ENCODE measurements at regions of chr11 and their contacts with region 1.

Region 1: GRCh38 chr11:38089726-38090125 is 1491.7 kb upstream of the RAG2 start:
- DNase-seq: no peak
- ATAC-seq: no peak
- H3K4me3 ChIP-seq: no peak overlapping the region
- H3K4me3 Mint-ChIP-seq: no peak overlapping the region
- H3K27ac ChIP-seq: no peak overlapping the region
- H3K27ac Mint-ChIP-seq: no peak overlapping the region
- H3K4me1 ChIP-seq: no peaks in the 10 kb centered on the region
- H3K4me1 Mint-ChIP-seq: no peaks in the 10 kb centered on the region
- H3K27me3 ChIP-seq: no peaks in the 10 kb centered on the region
- H3K27me3 Mint-ChIP-seq: no peaks in the 10 kb centered on the region
- CTCF ChIP-seq: no peak

Region 2: DNA sequence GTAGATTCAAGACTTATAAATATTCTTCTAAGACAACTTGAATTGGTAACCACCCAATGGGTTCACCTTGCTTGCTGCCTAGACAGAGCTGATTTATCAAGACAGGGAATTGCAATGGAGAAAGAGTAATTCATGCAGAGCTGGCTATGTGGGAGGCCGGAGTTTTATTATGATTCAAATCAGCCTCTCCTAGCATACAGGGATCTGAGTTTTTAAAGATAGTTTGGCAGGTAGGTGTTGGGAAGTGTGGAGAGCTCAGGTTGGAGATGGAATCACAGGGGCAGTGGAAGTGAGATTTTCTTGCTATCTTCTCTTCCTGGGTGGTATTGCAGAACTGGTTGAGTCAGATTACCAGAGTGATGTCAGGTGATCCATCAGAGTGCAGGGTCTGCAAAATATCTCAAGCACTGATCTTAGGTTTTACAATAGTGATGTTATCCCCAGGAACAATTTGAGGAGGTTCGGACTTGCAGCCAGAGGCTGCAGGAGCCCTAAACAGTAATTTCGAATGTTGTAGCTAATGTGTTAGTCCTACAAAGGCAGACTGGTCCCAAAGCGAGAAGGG is 43.1 kb before region 1 on chr11:
- CTCF ChIA-PET with region 1: no interaction called
- POLR2A ChIA-PET with region 1: no interaction called
- intact Hi-C with region 1: no loop called
- DNase-seq: no peak
- ATAC-seq: no peak
- H3K4me3 ChIP-seq: no peak overlapping the region
- H3K4me3 Mint-ChIP-seq: no peak overlapping the region
- H3K27ac ChIP-seq: no peak overlapping the region
- H3K27ac Mint-ChIP-seq: no peak overlapping the region
- H3K4me1 ChIP-seq: no peaks in the 10 kb centered on the region
- H3K4me1 Mint-ChIP-seq: no peaks in the 10 kb centered on the region
- H3K27me3 ChIP-seq: no peaks in the 10 kb centered on the region
- H3K27me3 Mint-ChIP-seq: no peaks in the 10 kb centered on the region
- CTCF ChIP-seq: no peak

Region 3: DNA sequence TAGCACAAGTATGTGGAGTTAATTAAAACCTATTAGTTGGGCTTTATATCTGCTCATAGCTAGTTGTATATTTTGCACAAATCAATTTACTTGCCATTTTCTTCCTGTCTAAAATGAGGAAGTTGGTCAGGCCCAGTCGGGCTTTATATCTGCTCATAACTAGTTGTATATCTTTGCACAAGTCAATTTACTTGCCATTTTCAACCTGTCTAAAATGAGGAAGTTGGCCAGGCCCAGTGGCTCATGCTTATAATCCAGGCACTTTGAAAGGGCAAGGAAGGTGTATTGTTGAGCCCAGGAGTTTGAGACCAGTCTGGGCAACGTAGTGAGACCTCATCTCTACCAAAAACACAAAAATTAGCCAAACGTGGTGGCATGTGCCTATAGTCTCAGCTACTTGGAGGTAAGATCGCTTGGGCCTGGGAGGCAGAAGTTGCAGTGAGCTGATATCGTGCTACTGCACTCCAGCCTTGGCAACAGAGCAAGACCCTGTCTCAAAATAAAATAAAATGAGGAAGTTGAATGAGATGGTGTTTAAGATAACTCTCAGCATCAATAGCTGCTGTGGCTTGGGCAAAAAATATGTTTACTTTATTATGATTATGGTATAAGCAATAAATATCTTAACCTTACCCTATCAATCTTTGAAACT is 66.9 kb after region 1 on chr11:
- CTCF ChIA-PET with region 1: no interaction called
- POLR2A ChIA-PET with region 1: no interaction called
- intact Hi-C with region 1: loop called in 1 of 2 experiments (anchors 10 kb)
- DNase-seq: no peak
- ATAC-seq: no peak
- H3K4me3 ChIP-seq: no peak overlapping the region
- H3K4me3 Mint-ChIP-seq: no peak overlapping the region
- H3K27ac ChIP-seq: no peak overlapping the region
- H3K27ac Mint-ChIP-seq: no peak overlapping the region
- H3K4me1 ChIP-seq: no peaks in the 10 kb centered on the region
- H3K4me1 Mint-ChIP-seq: no peaks in the 10 kb centered on the region
- H3K27me3 ChIP-seq: no peaks in the 10 kb centered on the region
- H3K27me3 Mint-ChIP-seq: no peaks in the 10 kb centered on the region
- CTCF ChIP-seq: no peak

Region 4: DNA sequence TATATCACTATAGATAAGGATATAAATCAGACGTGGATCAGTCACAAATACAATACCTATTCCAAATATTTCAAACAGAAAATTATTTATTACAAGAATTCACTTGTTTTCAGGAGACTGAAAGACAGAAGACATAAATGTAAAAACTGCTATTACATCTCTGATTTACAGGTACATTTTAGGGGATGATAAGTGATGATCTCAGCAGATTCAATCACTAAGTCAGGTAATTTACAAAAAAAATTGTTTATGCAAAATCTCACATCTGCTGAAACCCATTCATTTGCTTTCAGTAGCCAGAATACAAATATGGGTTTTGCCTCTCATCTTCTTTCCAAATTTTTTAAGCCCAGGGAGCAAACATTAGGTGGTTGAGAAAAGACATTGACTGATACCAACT is 156.7 kb after region 1 on chr11:
- CTCF ChIA-PET with region 1: no interaction called
- POLR2A ChIA-PET with region 1: no interaction called
- intact Hi-C with region 1: no loop called
- DNase-seq: no peak
- ATAC-seq: no peak
- H3K4me3 ChIP-seq: no peak overlapping the region
- H3K4me3 Mint-ChIP-seq: no peak overlapping the region
- H3K27ac ChIP-seq: no peak overlapping the region
- H3K27ac Mint-ChIP-seq: no peak overlapping the region
- H3K4me1 ChIP-seq: no peaks in the 10 kb centered on the region
- H3K4me1 Mint-ChIP-seq: no peaks in the 10 kb centered on the region
- H3K27me3 ChIP-seq: no peaks in the 10 kb centered on the region
- H3K27me3 Mint-ChIP-seq: no peaks in the 10 kb centered on the region
- CTCF ChIP-seq: no peak